Naive thymus-derived CD8-positive, alpha-beta T cell (primary cell): ENCODE measurements at regions of chr16 and their contacts with region 1.

Region 1: GRCh38 chr16:30585400-30586189 is at the start of gene ZNF785:
- DNase-seq: peak; percentile 75 to 97 (median 92)
- ATAC-seq: peak; percentile 99 to 100
- H3K4me3 Mint-ChIP-seq: peak within 1 kb of the TSS; percentile 82 to 96 (median 90)
- H3K27ac Mint-ChIP-seq: peak within 1 kb of the TSS; percentile 83 to 95 (median 92)
- H3K4me1 Mint-ChIP-seq: peaks cover 9 to 48% (median 28%) of the 10 kb centered on the region in 4 donors
- H3K27me3 Mint-ChIP-seq: peaks cover 0 to 1% (median 0%) of the 10 kb centered on the region in 5 donors
- polyA plus RNA-seq, gene ZNF785: 1.6 to 3.5 (median 3.4) TPM

Region 2: GRCh38 chr16:30609926-30610839 is 24.6 kb after region 1 on chr16 and contains the start of gene ZNF689:
- POLR2A ChIA-PET with region 1: interaction called, 10 read pairs
- DNase-seq: peak; percentile 77 to 99 (median 94)
- ATAC-seq: peak; percentile 92 to 93
- H3K4me3 Mint-ChIP-seq: peak within 1 kb of the TSS; percentile 87 to 97 (median 94)
- H3K27ac Mint-ChIP-seq: peak within 1 kb of the TSS; percentile 94 to 99 (median 97)
- H3K4me1 Mint-ChIP-seq: peaks cover 5 to 30% (median 27%) of the 10 kb centered on the region in 4 donors
- H3K27me3 Mint-ChIP-seq: peaks cover 0 to 1% (median 0%) of the 10 kb centered on the region in 5 donors
- polyA plus RNA-seq, gene ZNF689: 7.7 to 12.5 (median 11.0) TPM